SK-N-SH (cell line): ENCODE measurements at regions of chr2 and their contacts with region 1.

Region 1: DNA sequence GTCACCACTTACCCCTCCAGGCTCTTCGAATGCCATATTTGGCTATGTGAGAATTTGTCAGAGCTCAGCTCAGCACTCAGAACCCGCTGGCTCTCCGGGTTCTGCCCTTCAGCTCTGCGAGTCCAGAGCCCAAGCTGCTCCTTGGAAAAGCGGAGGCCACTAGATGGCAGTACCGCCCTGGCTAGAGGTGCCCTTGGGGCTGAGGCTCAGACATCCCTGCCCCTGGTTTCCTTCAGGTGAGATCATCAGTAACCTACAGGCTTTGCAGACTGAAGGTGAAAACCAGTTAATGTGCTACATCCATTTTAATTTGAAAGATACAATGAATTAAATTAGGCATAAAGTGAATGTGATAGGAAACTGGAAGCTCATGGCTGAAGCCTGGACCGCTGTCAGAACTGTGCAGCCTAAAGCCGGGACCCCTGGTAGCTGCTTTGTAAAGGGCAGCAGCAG is 285.6 kb downstream of the AGAP1 start:
- DNase-seq: peak; percentile 78
- H3K4me3 ChIP-seq: no peak overlapping the region; a peak in 1 of 4 replicates
- H3K27ac ChIP-seq: no peak overlapping the region
- H3K4me1 ChIP-seq: no peaks in the 10 kb centered on the region
- H3K27me3 ChIP-seq: no peaks in the 10 kb centered on the region
- CTCF ChIP-seq: peak; percentile 95
- EP300 ChIP-seq: no peak
- RAD21 ChIP-seq: peak; percentile 89

Region 2: GRCh38 chr2:235754352-235755207 is 24.9 kb before region 1 on chr2:
- CTCF ChIA-PET with region 1: interaction called, 13 read pairs
- POLR2A ChIA-PET with region 1: no interaction called
- DNase-seq: no peak
- H3K4me3 ChIP-seq: no peak overlapping the region
- H3K27ac ChIP-seq: no peak overlapping the region
- H3K4me1 ChIP-seq: no peaks in the 10 kb centered on the region; a peak in 1 of 4 replicates
- H3K27me3 ChIP-seq: no peaks in the 10 kb centered on the region
- CTCF ChIP-seq: no peak
- EP300 ChIP-seq: no peak
- RAD21 ChIP-seq: no peak

Region 3: DNA sequence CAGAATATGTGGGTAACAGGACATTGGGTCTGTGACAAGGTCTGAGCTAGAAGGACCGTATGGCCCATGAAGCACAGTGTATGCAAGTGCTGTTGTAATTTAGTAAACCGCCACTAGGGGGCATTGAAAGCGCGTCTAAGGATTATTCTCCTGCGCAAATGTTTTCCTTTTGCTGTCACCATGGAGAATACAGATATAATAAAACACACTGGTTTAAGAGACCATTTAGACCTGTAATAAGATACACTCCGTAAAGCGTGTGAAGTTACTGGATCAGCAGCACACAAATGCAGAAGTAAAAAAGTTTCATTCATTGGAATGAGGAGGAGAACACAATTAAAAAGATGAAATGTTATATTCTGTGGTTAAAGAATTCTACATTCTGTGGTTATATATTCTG is 13.2 kb before region 1 on chr2:
- CTCF ChIA-PET with region 1: interaction called, 43 read pairs
- POLR2A ChIA-PET with region 1: no interaction called
- DNase-seq: peak; percentile 81
- H3K4me3 ChIP-seq: no peak overlapping the region; a peak in 1 of 4 replicates
- H3K27ac ChIP-seq: peak overlapping the region in 1 of 2 experiments; percentile 43; a peak in 1 of 4 replicates
- H3K4me1 ChIP-seq: no peaks in the 10 kb centered on the region
- H3K27me3 ChIP-seq: no peaks in the 10 kb centered on the region
- CTCF ChIP-seq: peak; percentile 91
- EP300 ChIP-seq: no peak
- RAD21 ChIP-seq: peak; percentile 84

Region 4: GRCh38 chr2:235793163-235793752 is 13.8 kb after region 1 on chr2:
- CTCF ChIA-PET with region 1: interaction called, 83 read pairs
- POLR2A ChIA-PET with region 1: no interaction called
- DNase-seq: peak; percentile 37
- H3K4me3 ChIP-seq: no peak overlapping the region
- H3K27ac ChIP-seq: no peak overlapping the region
- H3K4me1 ChIP-seq: peaks cover 0 to 3% of the 10 kb centered on the region in 2 experiments; a peak in 1 of 4 replicates
- H3K27me3 ChIP-seq: no peaks in the 10 kb centered on the region
- CTCF ChIP-seq: no peak; the same call in 1 of the 2 replicates
- EP300 ChIP-seq: no peak
- RAD21 ChIP-seq: peak; percentile 42

Region 5: DNA sequence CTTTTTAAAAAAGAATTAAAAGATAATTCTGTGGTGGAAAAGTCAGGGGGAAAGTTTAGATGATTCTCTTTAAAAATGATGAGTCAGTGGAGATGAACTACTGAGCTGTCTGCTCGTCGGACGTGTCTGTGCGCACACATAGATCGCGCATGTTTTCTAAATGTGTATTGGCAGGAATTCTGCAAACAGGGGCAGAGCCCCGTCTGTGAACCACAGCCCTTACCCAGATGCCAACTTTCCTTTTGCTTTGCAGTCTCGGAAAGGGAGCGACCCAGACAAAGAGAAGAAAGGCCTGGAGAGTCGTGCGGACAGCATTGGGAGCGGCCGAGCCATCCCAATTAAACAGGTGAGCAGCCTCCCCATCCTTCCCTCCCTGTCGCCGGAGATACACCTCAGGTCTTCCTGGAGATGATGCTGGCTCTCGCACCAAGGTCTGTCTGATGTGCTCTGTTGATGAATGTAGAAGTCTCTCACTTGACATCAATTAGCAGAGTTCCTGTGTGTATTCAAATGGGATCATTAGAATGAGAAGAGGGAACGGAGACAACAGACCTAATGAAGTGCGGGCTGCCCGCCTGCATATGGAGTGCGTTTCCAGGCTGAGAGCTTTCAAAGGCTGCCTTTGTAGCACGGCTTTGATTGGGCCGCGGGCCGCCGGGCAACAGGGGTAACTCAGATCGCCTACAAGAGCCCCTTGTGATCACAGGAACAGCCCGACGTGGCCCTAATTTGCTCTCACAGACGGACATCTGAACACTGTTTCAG is 27.7 kb after region 1 on chr2:
- CTCF ChIA-PET with region 1: interaction called, 18 read pairs
- POLR2A ChIA-PET with region 1: no interaction called
- DNase-seq: no peak
- H3K4me3 ChIP-seq: no peak overlapping the region
- H3K27ac ChIP-seq: no peak overlapping the region
- H3K4me1 ChIP-seq: peaks cover 0 to 2% of the 10 kb centered on the region in 2 experiments; a peak in 1 of 4 replicates
- H3K27me3 ChIP-seq: no peaks in the 10 kb centered on the region
- CTCF ChIP-seq: no peak
- EP300 ChIP-seq: no peak
- RAD21 ChIP-seq: no peak

Region 6: GRCh38 chr2:236168110-236169067 is 388.9 kb after region 1 on chr2 and contains the start of gene GBX2:
- CTCF ChIA-PET with region 1: interaction called, 372 read pairs
- POLR2A ChIA-PET with region 1: no interaction called
- DNase-seq: peak; percentile 91
- H3K4me3 ChIP-seq: peak within 1 kb of the TSS; percentile 34 to 60
- H3K27ac ChIP-seq: no peak within 1 kb of the TSS
- H3K4me1 ChIP-seq: peaks cover 0 to 12% of the 10 kb centered on the region in 2 experiments; a peak in 2 of 4 replicates
- H3K27me3 ChIP-seq: peaks cover 92% of the 10 kb centered on the region
- CTCF ChIP-seq: no peak
- EP300 ChIP-seq: no peak
- RAD21 ChIP-seq: no peak
- polyA plus RNA-seq, gene GBX2: 0.03 and 0.16 TPM in 2 replicates